ENCODE measurements at regions of chrX and their contacts with region 1.

Region 1: GRCh38 chrX:16946361-16946964 is at the start of gene REPS2:
- DNase-seq: peak; percentile 94
- H3K4me3 ChIP-seq: peak within 1 kb of the TSS; percentile 35 to 81 (median 52)
- H3K27ac ChIP-seq: peak within 1 kb of the TSS in 4 of 8 donors; percentile 28 to 63 (median 44)
- H3K4me1 ChIP-seq: peaks cover 0 to 18% (median 3%) of the 10 kb centered on the region in 6 donors
- H3K27me3 ChIP-seq: no peaks in the 10 kb centered on the region
- CTCF ChIP-seq: no peak
- POLR2A ChIP-seq: no peak
- total RNA-seq, gene REPS2: 5.5 to 18.3 (median 8.8) TPM

Region 2: GRCh38 chrX:16882702-16883486 is 63.6 kb before region 1 on chrX:
- intact Hi-C with region 1: loop called (anchors 10 kb)
- DNase-seq: peak; percentile 87
- H3K4me3 ChIP-seq: peak overlapping the region; percentile 24 to 65 (median 36)
- H3K27ac ChIP-seq: peak overlapping the region; percentile 40 to 87 (median 80)
- H3K4me1 ChIP-seq: peaks cover 0 to 8% (median 2%) of the 10 kb centered on the region in 6 donors
- H3K27me3 ChIP-seq: peaks cover 0 to 34% (median 3%) of the 10 kb centered on the region in 7 donors
- CTCF ChIP-seq: peak in 10 of 11 experiments; percentile 32 to 68 (median 60)
- POLR2A ChIP-seq: no peak

Region 3: DNA sequence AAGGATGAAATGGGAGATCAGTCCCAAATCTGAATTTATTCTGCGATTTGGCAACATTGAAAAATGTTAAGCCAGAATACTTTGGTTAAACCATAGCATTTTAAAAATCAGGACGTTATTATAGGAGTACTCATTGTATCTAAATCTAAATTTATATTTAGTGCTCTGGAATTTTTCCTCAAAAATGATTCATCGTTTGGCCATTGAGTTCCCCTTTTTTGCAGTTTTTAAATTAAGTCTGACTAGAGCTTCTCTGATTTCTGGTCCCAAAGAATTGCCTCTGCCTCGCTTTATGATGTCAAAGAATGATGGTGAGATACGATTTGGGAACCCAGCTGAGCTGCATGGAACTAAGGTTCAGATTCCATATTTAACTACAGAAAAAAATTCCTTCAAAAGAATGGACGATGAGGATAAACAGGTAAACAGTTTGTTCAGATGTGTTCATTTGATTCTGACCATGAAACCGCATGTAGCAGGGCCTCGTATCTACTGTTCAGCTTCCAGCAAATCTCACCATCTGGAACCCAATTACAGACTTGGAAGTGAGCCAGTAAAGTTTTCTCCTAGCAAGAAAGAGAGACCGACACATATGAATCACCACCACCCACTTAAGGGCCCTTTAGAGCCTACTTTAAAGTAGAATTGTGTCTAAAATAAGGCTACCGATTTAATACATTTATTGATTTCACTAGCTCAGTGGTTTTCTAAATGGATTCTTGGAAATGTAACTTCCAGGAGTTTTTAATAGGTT is 75.6 kb after region 1 on chrX:
- intact Hi-C with region 1: no loop called
- DNase-seq: no peak
- H3K4me3 ChIP-seq: no peak overlapping the region
- H3K27ac ChIP-seq: no peak overlapping the region
- H3K4me1 ChIP-seq: peaks cover 0 to 7% (median 0%) of the 10 kb centered on the region in 6 donors
- H3K27me3 ChIP-seq: peaks cover 0 to 2% (median 0%) of the 10 kb centered on the region in 7 donors
- CTCF ChIP-seq: no peak
- POLR2A ChIP-seq: no peak

Measured in spleen (tissue), 13 donors.